ENCODE measurements at regions of chr7 and their contacts with region 1.

Region 1: DNA sequence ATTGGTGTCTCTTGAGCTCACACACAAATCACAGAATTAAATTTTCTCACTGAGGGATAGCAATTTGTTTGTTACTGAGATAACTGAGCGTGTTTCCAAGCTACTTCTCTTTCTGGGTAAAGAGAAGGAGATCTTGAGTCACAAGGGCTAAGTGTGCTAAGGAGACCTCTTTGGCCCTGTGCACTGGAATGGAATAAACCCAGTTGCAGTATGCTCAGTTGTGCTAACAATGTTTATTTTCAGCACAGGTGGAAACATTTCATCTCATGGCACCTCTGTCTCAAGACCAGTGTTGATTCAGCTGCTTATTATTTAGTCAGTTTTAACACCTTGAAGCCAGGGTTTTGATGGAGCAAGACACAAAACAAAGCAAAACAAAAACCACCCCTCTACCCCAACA is 22.5 kb upstream of the UBE2H start:
- DNase-seq: no peak
- ATAC-seq: no peak
- H3K4me3 ChIP-seq: no peak overlapping the region
- H3K27ac ChIP-seq: no peak overlapping the region
- H3K4me1 ChIP-seq: no peaks in the 10 kb centered on the region; a peak in 1 of 5 replicates
- H3K27me3 ChIP-seq: peaks cover 4 to 6% of the 10 kb centered on the region in 2 experiments; a peak in 3 of 5 replicates
- CTCF ChIP-seq: no peak
- EP300 ChIP-seq: no peak
- POLR2A ChIP-seq: no peak
- RAD21 ChIP-seq: no peak

Region 2: GRCh38 chr7:129914536-129915272 is 60.6 kb before region 1 on chr7:
- CTCF ChIA-PET with region 1: no interaction called
- POLR2A ChIA-PET with region 1: no interaction called
- in situ Hi-C with region 1: no loop called
- intact Hi-C with region 1: no loop called
- DNase-seq: peak in 1 of 4 experiments; percentile 33
- ATAC-seq: peak; percentile 45
- H3K4me3 ChIP-seq: no peak overlapping the region
- H3K27ac ChIP-seq: no peak overlapping the region
- H3K4me1 ChIP-seq: peaks cover 0 to 11% of the 10 kb centered on the region in 2 experiments; a peak in 2 of 5 replicates
- H3K27me3 ChIP-seq: no peaks in the 10 kb centered on the region
- CTCF ChIP-seq: no peak
- EP300 ChIP-seq: no peak
- POLR2A ChIP-seq: no peak
- RAD21 ChIP-seq: no peak

Region 3: GRCh38 chr7:129958643-129959470 is 16.5 kb before region 1 on chr7:
- CTCF ChIA-PET with region 1: no interaction called
- POLR2A ChIA-PET with region 1: interaction called, 11 read pairs
- in situ Hi-C with region 1: no loop called
- intact Hi-C with region 1: no loop called
- DNase-seq: peak; percentile 95 to 99 (median 97)
- ATAC-seq: peak; percentile 97
- H3K4me3 ChIP-seq: no peak overlapping the region
- H3K27ac ChIP-seq: peak overlapping the region; percentile 43; the same call in 2 of the 3 replicates
- H3K4me1 ChIP-seq: peaks cover 20 to 31% of the 10 kb centered on the region in 2 experiments
- H3K27me3 ChIP-seq: no peaks in the 10 kb centered on the region
- CTCF ChIP-seq: 0 out of 6 replicates have a peak, but pooled peaks of 2 of the 3 experiments have one; percentile 2 to 8
- EP300 ChIP-seq: peak; percentile 99
- POLR2A ChIP-seq: no peak
- RAD21 ChIP-seq: peak; percentile 28 to 57; a peak in 3 of 4 replicates

Measured in K562 (cell line).